Dendritic cell treated with granulocyte-macrophage colony-stimulating factor and Interleukin-4, amounts not matched to agents 40 ng/mL and 50 ng/mL, for 4 days (primary cell): ENCODE measurements at regions of chr10 and their contacts with region 1.

Region 1: GRCh38 chr10:89256340-89256739 is 4.8 kb upstream of the LIPA start:
- H3K4me3 Mint-ChIP-seq: no peak overlapping the region
- H3K27ac Mint-ChIP-seq: peak overlapping the region; percentile 83
- H3K4me1 Mint-ChIP-seq: peaks cover 40% of the 10 kb centered on the region
- H3K27me3 Mint-ChIP-seq: no peaks in the 10 kb centered on the region

Region 2: GRCh38 chr10:89332123-89332633 is 75.8 kb after region 1 on chr10:
- intact Hi-C with region 1: no loop called
- H3K4me3 Mint-ChIP-seq: peak overlapping the region; percentile 52
- H3K27ac Mint-ChIP-seq: peak overlapping the region; percentile 75
- H3K4me1 Mint-ChIP-seq: peaks cover 50% of the 10 kb centered on the region
- H3K27me3 Mint-ChIP-seq: no peaks in the 10 kb centered on the region

Region 3: GRCh38 chr10:89421018-89421476 is 164.7 kb after region 1 on chr10:
- intact Hi-C with region 1: loop called (anchors 5 kb)
- H3K4me3 Mint-ChIP-seq: no peak overlapping the region
- H3K27ac Mint-ChIP-seq: no peak overlapping the region
- H3K4me1 Mint-ChIP-seq: peaks cover 19% of the 10 kb centered on the region
- H3K27me3 Mint-ChIP-seq: no peaks in the 10 kb centered on the region